Activated naive CD8-positive, alpha-beta T cell treated with anti-CD3 and anti-CD28 coated beads, Interleukin-2, amount 10 ng/mL, durations not matched to agents 7 days and 5 days (primary cell): ENCODE measurements at regions of chr16 and their contacts with region 1.

Region 1: GRCh38 chr16:2537453-2538379 is at the start of gene PDPK1:
- DNase-seq: peak; percentile 96
- ATAC-seq: peak; percentile 90
- H3K4me3 Mint-ChIP-seq: peak within 1 kb of the TSS; percentile 86
- H3K27ac Mint-ChIP-seq: peak within 1 kb of the TSS; percentile 86
- H3K4me1 Mint-ChIP-seq: peaks cover 30% of the 10 kb centered on the region
- H3K27me3 Mint-ChIP-seq: no peaks in the 10 kb centered on the region
- total RNA-seq, gene PDPK1: 50.6 to 55.1 TPM

Region 2: GRCh38 chr16:2520092-2520783 is 17.5 kb before region 1 on chr16 and contains the start of gene AMDHD2:
- POLR2A ChIA-PET with region 1: interaction called, 69 read pairs
- DNase-seq: peak; percentile 92
- ATAC-seq: peak; percentile 64
- H3K4me3 Mint-ChIP-seq: peak within 1 kb of the TSS; percentile 83
- H3K27ac Mint-ChIP-seq: peak within 1 kb of the TSS; percentile 93
- H3K4me1 Mint-ChIP-seq: peaks cover 34% of the 10 kb centered on the region
- H3K27me3 Mint-ChIP-seq: no peaks in the 10 kb centered on the region
- total RNA-seq, gene AMDHD2: 74.0 to 75.4 TPM